Dorsolateral prefrontal cortex (tissue), 120 donors: ENCODE measurements at regions of chr2 and their contacts with region 1.

Region 1: GRCh38 chr2:169877398-169877797 is 50.1 kb downstream of the UBR3 start:
- DNase-seq: no peak
- H3K4me3 ChIP-seq: no peak overlapping the region
- H3K27ac ChIP-seq: no peak overlapping the region
- H3K27me3 ChIP-seq: no peaks in the 10 kb centered on the region
- CTCF ChIP-seq: peak in 51 of 56 donors; percentile 17 to 71 (median 45)

Region 2: GRCh38 chr2:169824373-169825333 is 52.7 kb before region 1 on chr2 and contains the start of gene METTL5:
- intact Hi-C with region 1: loop called (anchors 2 to 10 kb)
- DNase-seq: peak; percentile 70 to 89 (median 78)
- H3K4me3 ChIP-seq: peak within 1 kb of the TSS; percentile 60 to 99 (median 84)
- H3K27ac ChIP-seq: peak within 1 kb of the TSS in 55 of 59 donors; percentile 4 to 92 (median 74)
- H3K27me3 ChIP-seq: no peaks in the 10 kb centered on the region
- CTCF ChIP-seq: peak; percentile 76 to 100 (median 99)
- total RNA-seq, gene METTL5: 26.8 to 69.9 (median 47.5) TPM

Region 3: GRCh38 chr2:170038734-170039133 is 161.3 kb after region 1 on chr2:
- intact Hi-C with region 1: no loop called
- DNase-seq: no peak
- H3K4me3 ChIP-seq: no peak overlapping the region
- H3K27ac ChIP-seq: no peak overlapping the region
- H3K27me3 ChIP-seq: no peaks in the 10 kb centered on the region
- CTCF ChIP-seq: no peak